Activated naive CD8-positive, alpha-beta T cell treated with anti-CD3 and anti-CD28 coated beads, Interleukin-2, amount 10 ng/mL, durations not matched to agents 7 days and 5 days (primary cell): ENCODE measurements at regions of chr5 and their contacts with region 1.

Region 1: GRCh38 chr5:43066799-43067741 is 27.0 kb upstream of the ANXA2R start:
- DNase-seq: peak; percentile 85
- ATAC-seq: peak; percentile 39
- H3K4me3 Mint-ChIP-seq: peak overlapping the region; percentile 99
- H3K27ac Mint-ChIP-seq: peak overlapping the region; percentile 100
- H3K4me1 Mint-ChIP-seq: peaks cover 30% of the 10 kb centered on the region
- H3K27me3 Mint-ChIP-seq: no peaks in the 10 kb centered on the region

Region 2: DNA sequence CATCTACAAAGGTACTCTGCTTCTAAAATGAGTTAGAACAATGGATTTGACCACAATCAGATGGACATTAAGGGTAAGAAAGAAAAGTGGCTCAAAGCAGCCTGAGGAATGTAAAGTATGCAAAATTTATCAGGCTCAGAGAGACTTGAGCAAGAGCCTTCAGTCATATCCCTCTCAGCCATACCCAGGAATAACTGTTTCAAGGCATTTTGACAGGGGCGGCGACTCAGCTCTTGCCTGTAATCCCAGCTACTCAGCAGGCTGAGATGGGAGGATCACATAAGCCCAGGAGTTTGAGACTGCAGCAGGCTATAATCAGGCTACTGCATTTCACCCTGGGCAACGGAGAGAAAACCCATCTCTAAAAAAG is 11.9 kb after region 1 on chr5:
- POLR2A ChIA-PET with region 1: no interaction called
- DNase-seq: no peak
- ATAC-seq: no peak
- H3K4me3 Mint-ChIP-seq: no peak overlapping the region
- H3K27ac Mint-ChIP-seq: no peak overlapping the region
- H3K4me1 Mint-ChIP-seq: peaks cover 12% of the 10 kb centered on the region
- H3K27me3 Mint-ChIP-seq: no peaks in the 10 kb centered on the region

Region 3: DNA sequence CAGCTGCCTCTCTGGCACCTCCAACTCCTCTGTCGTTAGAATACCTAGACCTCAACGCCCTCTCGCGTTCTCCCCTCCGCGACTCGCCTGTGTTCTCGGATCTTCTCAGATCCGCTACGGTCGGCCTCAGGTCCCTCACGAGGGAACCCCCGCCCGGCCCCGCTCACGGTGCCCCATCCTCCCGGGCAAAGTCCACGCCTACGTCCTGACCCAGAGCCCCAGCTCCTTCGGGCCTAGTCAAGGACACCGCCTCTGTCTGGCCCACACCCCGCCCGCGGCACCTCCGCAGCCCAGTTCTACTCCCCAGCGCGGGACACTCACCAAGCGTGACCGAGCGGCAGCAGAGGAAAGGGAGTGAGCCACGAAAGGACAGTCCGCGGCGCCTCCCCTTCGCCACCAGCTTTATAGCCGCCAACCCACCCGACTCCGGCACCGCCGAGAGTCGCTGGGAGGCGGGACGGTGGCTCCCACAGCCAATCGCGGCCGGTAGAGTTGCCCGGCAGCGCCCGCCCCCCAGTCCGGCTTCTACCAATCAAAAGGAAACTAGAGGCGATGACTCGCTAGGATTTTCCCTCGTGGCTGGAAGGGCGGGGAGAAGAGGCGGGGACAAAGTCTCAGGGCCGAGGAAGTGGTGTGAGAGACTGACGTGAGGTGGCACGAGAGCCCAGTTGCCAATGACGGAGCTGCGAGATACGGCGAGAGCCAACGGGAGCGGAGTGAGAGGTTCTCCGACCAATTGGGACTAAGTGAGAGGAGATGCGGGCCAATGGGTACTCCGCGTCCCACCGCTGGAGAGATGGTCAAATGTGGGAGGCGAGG is 246.2 kb after region 1 on chr5 and contains the start of gene HMGCS1:
- POLR2A ChIA-PET with region 1: interaction called, 13 read pairs
- DNase-seq: peak; percentile 96
- ATAC-seq: peak; percentile 96
- H3K4me3 Mint-ChIP-seq: peak within 1 kb of the TSS; percentile 100
- H3K27ac Mint-ChIP-seq: peak within 1 kb of the TSS; percentile 93
- H3K4me1 Mint-ChIP-seq: peaks cover 31% of the 10 kb centered on the region
- H3K27me3 Mint-ChIP-seq: no peaks in the 10 kb centered on the region
- total RNA-seq, gene HMGCS1: 46.9 to 51.8 TPM